CD8-positive, alpha-beta memory T cell (primary cell): ENCODE measurements at regions of chr1 and their contacts with region 1.

Region 1: GRCh38 chr1:150578965-150579798 is at the start of gene MCL1:
- DNase-seq: peak; percentile 74 to 93 (median 84)
- H3K4me3 ChIP-seq: peak within 1 kb of the TSS; percentile 76
- H3K4me3 Mint-ChIP-seq: peak within 1 kb of the TSS; percentile 96 to 100 (median 99)
- H3K27ac ChIP-seq: peak within 1 kb of the TSS; percentile 99
- H3K27ac Mint-ChIP-seq: peak within 1 kb of the TSS; percentile 94 to 100 (median 98)
- H3K4me1 ChIP-seq: peaks cover 7% of the 10 kb centered on the region
- H3K4me1 Mint-ChIP-seq: peaks cover 33 to 41% (median 40%) of the 10 kb centered on the region in 3 donors
- H3K27me3 ChIP-seq: no peaks in the 10 kb centered on the region
- H3K27me3 Mint-ChIP-seq: peaks cover 0 to 18% of the 10 kb centered on the region in 2 donors
- total RNA-seq, gene MCL1: 211 to 216 TPM

Region 2: GRCh38 chr1:150363426-150364230 is 215.6 kb before region 1 on chr1 and contains the start of gene RPRD2:
- CTCF ChIA-PET with region 1: no interaction called
- POLR2A ChIA-PET with region 1: interaction called, 13 read pairs
- DNase-seq: peak; percentile 98 to 100 (median 99)
- H3K4me3 ChIP-seq: peak within 1 kb of the TSS; percentile 94
- H3K4me3 Mint-ChIP-seq: peak within 1 kb of the TSS; percentile 93 to 100 (median 98)
- H3K27ac ChIP-seq: peak within 1 kb of the TSS; percentile 89
- H3K27ac Mint-ChIP-seq: peak within 1 kb of the TSS; percentile 93 to 100 (median 98)
- H3K4me1 ChIP-seq: peaks cover 13% of the 10 kb centered on the region
- H3K4me1 Mint-ChIP-seq: peaks cover 24 to 39% (median 35%) of the 10 kb centered on the region in 3 donors
- H3K27me3 ChIP-seq: no peaks in the 10 kb centered on the region
- H3K27me3 Mint-ChIP-seq: peaks cover 0 to 5% of the 10 kb centered on the region in 2 donors
- total RNA-seq, gene RPRD2: 24.1 to 26.4 TPM

Region 3: DNA sequence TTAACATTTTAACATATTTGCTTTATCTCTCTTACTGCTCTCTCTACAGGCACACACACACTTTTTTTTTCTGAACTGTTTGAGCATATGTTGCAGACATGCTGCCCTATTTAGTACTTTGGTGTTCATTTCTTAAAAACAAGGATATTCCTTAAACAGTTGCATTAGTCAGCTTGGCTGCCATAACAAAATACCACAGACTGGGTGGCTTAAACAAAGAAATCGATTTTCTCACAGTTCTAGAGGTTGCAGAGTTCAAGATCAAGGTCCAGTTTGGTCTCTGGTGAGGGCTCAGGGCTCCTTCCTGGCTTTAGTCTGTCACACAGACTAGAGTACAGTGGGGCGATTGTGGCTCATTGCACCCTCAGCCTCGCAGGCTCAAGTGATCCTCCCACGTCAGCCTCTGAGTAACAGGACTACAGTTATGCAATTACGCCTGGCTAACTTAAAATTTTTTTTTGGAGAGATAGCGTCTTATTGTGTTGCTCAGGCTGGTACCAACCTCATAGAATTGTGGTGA is 168.5 kb before region 1 on chr1:
- CTCF ChIA-PET with region 1: no interaction called
- POLR2A ChIA-PET with region 1: no interaction called
- DNase-seq: no peak
- H3K4me3 ChIP-seq: no peak overlapping the region
- H3K4me3 Mint-ChIP-seq: no peak overlapping the region
- H3K27ac ChIP-seq: no peak overlapping the region
- H3K27ac Mint-ChIP-seq: no peak overlapping the region
- H3K4me1 ChIP-seq: peaks cover 4% of the 10 kb centered on the region
- H3K4me1 Mint-ChIP-seq: peaks cover 55 to 79% (median 73%) of the 10 kb centered on the region in 3 donors
- H3K27me3 ChIP-seq: no peaks in the 10 kb centered on the region
- H3K27me3 Mint-ChIP-seq: no peaks in the 10 kb centered on the region

Region 4: GRCh38 chr1:150567717-150568593 is 11.2 kb before region 1 on chr1:
- CTCF ChIA-PET with region 1: interaction called, 325 read pairs
- POLR2A ChIA-PET with region 1: interaction called, 486 read pairs
- DNase-seq: peak in 1 of 5 donors; percentile 63
- H3K4me3 ChIP-seq: peak overlapping the region; percentile 59
- H3K4me3 Mint-ChIP-seq: peak overlapping the region; percentile 78 to 100 (median 88)
- H3K27ac ChIP-seq: peak overlapping the region; percentile 49
- H3K27ac Mint-ChIP-seq: peak overlapping the region; percentile 90 to 98 (median 96)
- H3K4me1 ChIP-seq: peaks cover 95% of the 10 kb centered on the region
- H3K4me1 Mint-ChIP-seq: peaks cover 79 to 96% (median 88%) of the 10 kb centered on the region in 3 donors
- H3K27me3 ChIP-seq: no peaks in the 10 kb centered on the region
- H3K27me3 Mint-ChIP-seq: no peaks in the 10 kb centered on the region

Region 5: GRCh38 chr1:150621497-150622302 is 42.5 kb after region 1 on chr1:
- CTCF ChIA-PET with region 1: interaction called, 18 read pairs
- POLR2A ChIA-PET with region 1: interaction called, 7 read pairs
- DNase-seq: peak; percentile 40 to 79 (median 54)
- H3K4me3 ChIP-seq: no peak overlapping the region
- H3K4me3 Mint-ChIP-seq: peak overlapping the region in 2 of 7 donors; percentile 35 to 37
- H3K27ac ChIP-seq: no peak overlapping the region
- H3K27ac Mint-ChIP-seq: peak overlapping the region; percentile 35 to 95 (median 86)
- H3K4me1 ChIP-seq: peaks cover 30% of the 10 kb centered on the region
- H3K4me1 Mint-ChIP-seq: peaks cover 29 to 63% (median 55%) of the 10 kb centered on the region in 3 donors
- H3K27me3 ChIP-seq: no peaks in the 10 kb centered on the region
- H3K27me3 Mint-ChIP-seq: no peaks in the 10 kb centered on the region

Region 6: GRCh38 chr1:150696590-150697524 is 117.7 kb after region 1 on chr1 and contains the start of gene GOLPH3L:
- CTCF ChIA-PET with region 1: no interaction called
- POLR2A ChIA-PET with region 1: interaction called, 12 read pairs
- DNase-seq: peak; percentile 77 to 94 (median 91)
- H3K4me3 ChIP-seq: peak within 1 kb of the TSS; percentile 83
- H3K4me3 Mint-ChIP-seq: peak within 1 kb of the TSS; percentile 94 to 100 (median 98)
- H3K27ac ChIP-seq: peak within 1 kb of the TSS; percentile 85
- H3K27ac Mint-ChIP-seq: peak within 1 kb of the TSS; percentile 84 to 99 (median 96)
- H3K4me1 ChIP-seq: peaks cover 10% of the 10 kb centered on the region
- H3K4me1 Mint-ChIP-seq: peaks cover 32 to 46% (median 45%) of the 10 kb centered on the region in 3 donors
- H3K27me3 ChIP-seq: no peaks in the 10 kb centered on the region
- H3K27me3 Mint-ChIP-seq: no peaks in the 10 kb centered on the region
- total RNA-seq, gene GOLPH3L: 18.1 to 20.0 TPM